ENCODE measurements at regions of chr11 and their contacts with region 1.

Region 1: DNA sequence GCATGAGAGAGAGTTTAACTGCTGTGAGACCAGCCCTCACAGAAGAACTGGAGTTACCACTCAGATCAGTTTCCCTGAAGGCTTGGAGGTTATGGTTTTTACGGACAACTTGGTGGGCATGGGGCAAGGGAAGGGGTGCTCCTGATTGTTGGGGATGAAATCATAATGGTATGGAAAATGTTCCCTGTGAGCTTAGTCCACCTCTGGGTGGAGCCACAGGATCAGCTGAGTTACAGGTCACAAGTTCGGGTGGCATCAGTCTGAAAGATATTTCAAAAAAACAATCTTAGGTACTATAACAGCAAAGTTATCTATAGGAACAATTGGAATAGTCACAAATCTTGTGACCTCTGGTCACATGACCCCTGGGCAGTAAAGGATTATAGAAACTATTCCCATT is 162.9 kb downstream of the DLG2 start:
- DNase-seq: no peak
- ATAC-seq: peak in 1 of 8 donors; percentile 39
- H3K4me3 ChIP-seq: no peak overlapping the region
- H3K27ac ChIP-seq: no peak overlapping the region
- H3K4me1 ChIP-seq: no peaks in the 10 kb centered on the region
- H3K27me3 ChIP-seq: no peaks in the 10 kb centered on the region
- CTCF ChIP-seq: peak in 7 of 9 donors; percentile 14 to 60 (median 32)

Region 2: DNA sequence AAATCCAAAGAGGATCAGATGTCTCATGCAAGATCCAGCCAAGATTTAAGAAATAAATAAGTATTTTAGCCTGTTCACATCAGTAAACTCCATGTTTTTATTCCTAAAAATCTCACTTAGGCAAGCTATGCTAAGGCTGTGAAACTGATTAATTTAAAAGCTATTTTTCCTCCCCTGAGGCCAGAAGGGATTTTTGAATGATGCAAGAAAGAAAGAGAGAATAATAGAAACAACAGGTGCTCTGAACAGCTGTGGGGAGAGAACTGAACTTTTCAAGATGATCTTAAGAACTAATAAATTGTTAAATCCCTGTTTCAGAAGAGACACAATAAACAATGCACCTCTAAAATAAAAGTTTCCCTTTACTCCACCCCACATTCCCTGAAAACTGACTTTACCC is 78.7 kb before region 1 on chr11:
- intact Hi-C with region 1: no loop called
- DNase-seq: no peak
- ATAC-seq: no peak
- H3K4me3 ChIP-seq: no peak overlapping the region
- H3K27ac ChIP-seq: no peak overlapping the region
- H3K4me1 ChIP-seq: no peaks in the 10 kb centered on the region
- H3K27me3 ChIP-seq: no peaks in the 10 kb centered on the region
- CTCF ChIP-seq: no peak

Region 3: DNA sequence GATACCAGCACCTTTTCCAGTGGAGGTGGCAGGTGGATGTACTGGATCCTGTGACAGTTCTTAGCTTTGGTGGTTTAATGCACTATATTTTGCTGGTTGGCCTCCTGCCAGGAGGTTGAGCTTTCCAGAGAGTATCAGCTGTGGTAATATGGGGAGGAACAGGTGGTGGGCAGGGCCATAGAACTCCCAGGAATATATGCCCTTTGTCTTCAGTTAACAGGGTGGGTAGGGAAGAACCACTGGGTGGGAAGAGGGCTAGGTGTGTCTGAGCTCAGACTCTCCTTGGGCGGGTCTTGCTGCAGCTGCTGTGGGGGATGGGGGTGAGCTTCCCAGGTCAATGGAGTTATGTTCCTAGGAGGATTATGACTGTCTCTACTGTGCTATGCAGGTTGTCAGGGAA is 41.0 kb before region 1 on chr11:
- intact Hi-C with region 1: loop called in 1 of 10 experiments (anchors 5 kb)
- DNase-seq: no peak
- ATAC-seq: no peak
- H3K4me3 ChIP-seq: no peak overlapping the region
- H3K27ac ChIP-seq: no peak overlapping the region
- H3K4me1 ChIP-seq: no peaks in the 10 kb centered on the region
- H3K27me3 ChIP-seq: no peaks in the 10 kb centered on the region
- CTCF ChIP-seq: no peak